ENCODE measurements at regions of chr16 and their contacts with region 1.

Region 1: GRCh38 chr16:46973207-46973995 is at the start of gene DNAJA2:
- DNase-seq: peak; percentile 93
- ATAC-seq: peak; percentile 93
- H3K4me3 Mint-ChIP-seq: peak within 1 kb of the TSS; percentile 91
- H3K27ac Mint-ChIP-seq: peak within 1 kb of the TSS; percentile 98
- H3K4me1 Mint-ChIP-seq: peaks cover 49% of the 10 kb centered on the region
- H3K27me3 Mint-ChIP-seq: no peaks in the 10 kb centered on the region
- total RNA-seq, gene DNAJA2: 55.6 to 70.2 TPM

Region 2: DNA sequence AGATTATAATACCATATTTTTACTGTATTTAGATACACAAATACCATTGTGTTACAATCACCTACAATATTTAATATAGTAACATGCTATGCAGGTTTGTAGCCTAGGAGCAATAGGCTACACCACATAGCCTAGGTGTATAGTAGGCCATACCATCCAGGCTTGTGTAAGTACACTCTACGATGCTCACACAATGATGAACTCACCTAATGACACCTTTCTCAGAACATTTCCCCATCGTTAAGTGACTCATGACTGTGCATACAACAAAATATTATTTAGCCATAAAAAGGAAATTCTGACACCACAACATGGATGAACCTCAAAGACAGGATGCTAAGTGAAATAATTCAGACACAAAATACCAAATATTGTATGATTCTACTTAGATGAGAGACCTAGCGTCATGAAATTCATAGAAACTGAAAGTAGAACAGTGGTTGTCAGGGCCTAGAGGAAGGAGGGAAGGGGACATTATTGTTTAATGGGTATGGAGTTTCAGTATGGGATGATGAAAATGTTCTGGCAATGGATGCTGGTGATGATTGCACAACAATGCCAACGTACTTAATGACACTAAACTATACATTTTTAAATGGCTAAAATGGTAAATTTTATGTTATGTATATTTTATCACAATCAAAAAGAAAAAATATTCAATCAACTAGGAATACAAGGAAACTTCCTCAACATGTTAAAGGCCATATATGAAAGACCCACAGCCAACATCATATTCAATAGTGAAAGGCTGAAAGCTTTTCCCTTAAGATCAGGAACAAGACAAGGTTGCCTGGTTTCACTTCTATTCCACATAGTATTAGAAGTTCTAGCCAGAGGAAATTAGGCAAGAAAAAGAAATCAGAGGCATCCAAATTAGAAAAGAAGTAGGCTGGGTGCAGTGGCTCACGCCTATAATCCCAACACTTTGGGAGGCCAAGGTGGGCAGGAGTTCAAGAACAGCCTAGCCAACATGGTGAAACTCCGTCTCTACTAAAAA is 136.6 kb before region 1 on chr16:
- CTCF ChIA-PET with region 1: no interaction called
- DNase-seq: no peak
- ATAC-seq: no peak
- H3K4me3 Mint-ChIP-seq: no peak overlapping the region
- H3K27ac Mint-ChIP-seq: no peak overlapping the region
- H3K4me1 Mint-ChIP-seq: peaks cover 5% of the 10 kb centered on the region
- H3K27me3 Mint-ChIP-seq: peaks cover 9% of the 10 kb centered on the region

Region 3: DNA sequence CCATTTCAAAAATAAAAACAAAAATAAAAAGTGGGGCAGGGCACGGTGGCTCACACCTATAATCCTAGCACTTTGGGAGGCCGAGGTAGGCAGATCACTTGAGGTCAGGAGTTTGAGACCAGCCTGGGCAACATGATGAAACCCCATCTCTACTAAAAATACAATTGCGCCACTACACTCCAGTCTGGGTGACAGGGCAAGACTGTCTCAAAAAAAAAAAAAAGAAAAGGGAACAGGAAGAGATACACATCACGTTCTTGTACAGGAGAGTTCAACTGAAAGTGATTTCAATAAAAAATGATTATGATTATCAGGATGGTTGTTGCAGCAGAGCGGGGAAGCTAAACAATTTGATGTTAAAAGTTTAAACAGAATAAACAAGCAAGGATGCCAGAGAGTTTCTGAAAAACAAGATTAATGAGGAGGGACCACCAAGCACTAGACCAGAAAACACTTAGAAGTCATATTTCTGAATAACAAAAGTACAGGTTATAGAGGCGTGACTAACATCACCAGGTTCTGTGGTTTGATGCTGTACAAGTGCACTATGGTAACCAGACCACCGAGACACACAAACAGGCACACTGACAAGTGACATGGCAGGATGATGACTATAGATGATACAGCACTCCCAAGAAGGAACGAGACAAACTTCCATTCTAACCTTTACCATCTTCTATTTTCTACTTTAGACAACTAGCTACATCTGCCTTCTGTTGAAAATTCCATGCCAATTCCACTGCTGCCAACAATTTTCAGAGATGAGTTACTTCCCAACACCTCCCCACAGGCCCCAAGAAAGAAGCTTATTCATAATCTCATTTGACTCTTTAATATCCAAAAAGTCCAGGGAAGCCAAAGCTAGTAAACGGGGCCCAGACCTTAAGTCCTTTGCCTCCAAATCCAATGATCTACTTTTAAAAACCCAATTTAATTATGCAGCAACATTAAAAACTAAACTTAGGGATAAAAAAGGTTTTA is 11.7 kb before region 1 on chr16:
- CTCF ChIA-PET with region 1: interaction called, 18 read pairs
- DNase-seq: peak; percentile 77
- ATAC-seq: peak; percentile 98
- H3K4me3 Mint-ChIP-seq: no peak overlapping the region
- H3K27ac Mint-ChIP-seq: peak overlapping the region; percentile 86
- H3K4me1 Mint-ChIP-seq: peaks cover 35% of the 10 kb centered on the region
- H3K27me3 Mint-ChIP-seq: no peaks in the 10 kb centered on the region

Measured in activated CD8-positive, alpha-beta memory T cell treated with anti-CD3 and anti-CD28 coated beads, Interleukin-2, amount 10 ng/mL, durations not matched to agents 7 days and 5 days (primary cell).